ENCODE measurements at regions of chr1 and their contacts with region 1.

Region 1: GRCh38 chr1:8032366-8032910 is 6.3 kb upstream of the ERRFI1 start:
- DNase-seq: no peak
- ATAC-seq: no peak
- H3K4me3 ChIP-seq: no peak overlapping the region
- H3K27ac ChIP-seq: no peak overlapping the region
- H3K4me1 ChIP-seq: peaks cover 0 to 18% (median 6%) of the 10 kb centered on the region in 12 donors
- H3K27me3 ChIP-seq: no peaks in the 10 kb centered on the region
- CTCF ChIP-seq: no peak
- POLR2A ChIP-seq: no peak

Region 2: GRCh38 chr1:8165595-8166360 is 133.3 kb after region 1 on chr1:
- intact Hi-C with region 1: no loop called
- DNase-seq: no peak
- ATAC-seq: no peak
- H3K4me3 ChIP-seq: no peak overlapping the region
- H3K27ac ChIP-seq: no peak overlapping the region
- H3K4me1 ChIP-seq: peaks cover 0 to 16% (median 11%) of the 10 kb centered on the region in 12 donors
- H3K27me3 ChIP-seq: no peaks in the 10 kb centered on the region
- CTCF ChIP-seq: peak in 1 of 12 donors; percentile 14
- POLR2A ChIP-seq: no peak

Region 3: DNA sequence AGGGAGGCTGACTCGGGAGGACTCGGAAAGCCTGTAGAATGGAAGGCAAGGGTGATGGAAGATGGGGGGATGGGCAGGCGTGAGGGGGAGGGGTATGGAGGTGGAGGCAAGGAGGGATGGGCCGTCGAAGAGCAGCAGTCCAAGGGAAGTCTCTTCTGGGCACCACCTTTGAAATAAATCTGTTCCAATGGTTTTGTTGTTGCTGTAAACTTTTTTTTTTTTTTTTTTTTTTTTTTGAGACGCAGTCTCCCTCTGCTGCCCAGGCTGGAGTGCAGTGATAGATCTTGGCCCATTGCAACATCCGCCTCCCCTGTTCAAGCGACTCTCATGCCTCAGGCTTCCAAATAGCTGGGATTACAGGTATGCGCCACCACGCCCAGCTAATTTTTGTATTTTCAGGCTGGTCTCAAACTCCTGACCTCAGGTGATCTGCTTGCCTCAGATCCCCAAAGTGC is 206.4 kb after region 1 on chr1:
- intact Hi-C with region 1: loop called in 4 of 10 experiments (anchors 2 to 5 kb)
- DNase-seq: no peak
- ATAC-seq: peak in 3 of 4 donors; percentile 52 to 68 (median 65)
- H3K4me3 ChIP-seq: no peak overlapping the region
- H3K27ac ChIP-seq: peak overlapping the region in 1 of 12 donors; percentile 34
- H3K4me1 ChIP-seq: peaks cover 0 to 11% (median 0%) of the 10 kb centered on the region in 12 donors
- H3K27me3 ChIP-seq: peaks cover 0 to 9% (median 0%) of the 10 kb centered on the region in 9 donors
- CTCF ChIP-seq: peak in 11 of 12 donors; percentile 13 to 49 (median 28)
- POLR2A ChIP-seq: no peak

Region 4: DNA sequence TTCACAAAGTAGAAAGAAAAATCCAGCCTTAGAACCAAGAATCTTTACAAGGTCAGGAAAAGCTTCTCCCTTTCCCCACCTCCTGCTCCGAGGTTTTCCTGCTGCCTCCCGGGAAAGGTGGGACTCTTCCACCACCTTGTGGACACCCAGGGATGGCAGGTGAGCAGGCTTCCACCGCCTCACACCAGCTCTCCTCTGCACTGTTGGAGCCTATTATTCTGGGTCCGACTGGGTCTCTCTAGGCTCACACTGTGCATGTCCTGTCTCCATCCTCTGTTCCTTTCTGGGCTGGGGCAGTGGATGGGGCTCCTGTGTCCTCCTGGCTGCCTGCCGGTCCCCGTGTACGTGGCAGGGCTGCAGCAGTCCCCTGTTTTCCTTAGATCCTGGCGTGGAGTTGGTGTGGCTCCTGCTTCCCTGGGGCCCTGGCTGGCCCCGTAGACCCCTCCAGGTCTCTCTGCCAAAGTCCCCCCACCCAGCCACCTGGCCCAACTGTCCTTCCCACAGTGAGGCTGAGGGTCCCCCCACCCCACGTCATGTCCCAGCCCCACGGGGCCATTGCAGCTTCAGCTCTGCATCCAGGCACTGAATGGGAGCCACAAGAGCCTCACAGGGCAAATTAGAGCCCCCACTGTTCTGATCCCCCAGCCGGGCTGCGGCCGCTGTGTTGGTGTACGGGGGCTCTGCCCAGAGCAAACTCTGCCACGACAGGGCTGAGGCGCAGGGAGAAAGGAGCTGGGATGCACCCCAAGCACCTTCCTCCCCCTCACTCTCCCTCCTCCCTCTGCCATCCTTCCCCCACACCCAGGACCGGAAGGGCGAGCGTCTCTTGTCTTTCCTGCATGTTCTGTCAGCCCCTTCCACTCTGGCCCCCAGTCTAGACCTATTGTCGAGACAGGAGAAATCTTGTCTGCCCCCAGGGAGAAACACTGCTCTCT is 282.2 kb after region 1 on chr1:
- intact Hi-C with region 1: loop called in 8 of 10 experiments (anchors 1 to 5 kb)
- DNase-seq: peak in 4 of 5 donors; percentile 65 to 69 (median 66)
- ATAC-seq: peak; percentile 64 to 87 (median 80)
- H3K4me3 ChIP-seq: no peak overlapping the region
- H3K27ac ChIP-seq: no peak overlapping the region
- H3K4me1 ChIP-seq: peaks cover 0 to 31% (median 15%) of the 10 kb centered on the region in 12 donors
- H3K27me3 ChIP-seq: peaks cover 0 to 13% (median 0%) of the 10 kb centered on the region in 9 donors
- CTCF ChIP-seq: peak; percentile 60 to 88 (median 82)
- POLR2A ChIP-seq: no peak